ENCODE measurements at regions of chr2 and their contacts with region 1.

Region 1: DNA sequence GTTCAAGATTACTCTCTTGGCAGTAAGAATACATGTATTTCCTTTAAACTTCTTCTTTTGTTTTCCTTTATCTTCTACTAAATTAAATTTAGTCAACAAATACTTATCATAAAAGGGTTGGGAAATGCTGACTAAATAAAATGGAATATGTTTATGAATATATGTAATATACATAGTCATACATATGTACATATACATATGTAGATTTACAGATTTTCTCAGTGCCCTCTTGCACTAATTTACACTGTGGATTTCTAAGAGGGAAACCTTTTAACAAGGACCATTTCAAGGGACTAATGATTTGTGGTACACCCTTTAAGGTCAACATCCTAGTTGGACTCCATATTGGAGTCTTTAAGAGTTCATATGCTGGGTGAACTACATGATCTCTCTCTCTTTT is 37.2 kb downstream of the FAM98A start:
- DNase-seq: no peak
- ATAC-seq: no peak
- H3K4me3 Mint-ChIP-seq: no peak overlapping the region
- H3K27ac Mint-ChIP-seq: no peak overlapping the region
- H3K4me1 Mint-ChIP-seq: peaks cover 5% of the 10 kb centered on the region
- H3K27me3 Mint-ChIP-seq: no peaks in the 10 kb centered on the region
- CTCF ChIP-seq: no peak

Region 2: DNA sequence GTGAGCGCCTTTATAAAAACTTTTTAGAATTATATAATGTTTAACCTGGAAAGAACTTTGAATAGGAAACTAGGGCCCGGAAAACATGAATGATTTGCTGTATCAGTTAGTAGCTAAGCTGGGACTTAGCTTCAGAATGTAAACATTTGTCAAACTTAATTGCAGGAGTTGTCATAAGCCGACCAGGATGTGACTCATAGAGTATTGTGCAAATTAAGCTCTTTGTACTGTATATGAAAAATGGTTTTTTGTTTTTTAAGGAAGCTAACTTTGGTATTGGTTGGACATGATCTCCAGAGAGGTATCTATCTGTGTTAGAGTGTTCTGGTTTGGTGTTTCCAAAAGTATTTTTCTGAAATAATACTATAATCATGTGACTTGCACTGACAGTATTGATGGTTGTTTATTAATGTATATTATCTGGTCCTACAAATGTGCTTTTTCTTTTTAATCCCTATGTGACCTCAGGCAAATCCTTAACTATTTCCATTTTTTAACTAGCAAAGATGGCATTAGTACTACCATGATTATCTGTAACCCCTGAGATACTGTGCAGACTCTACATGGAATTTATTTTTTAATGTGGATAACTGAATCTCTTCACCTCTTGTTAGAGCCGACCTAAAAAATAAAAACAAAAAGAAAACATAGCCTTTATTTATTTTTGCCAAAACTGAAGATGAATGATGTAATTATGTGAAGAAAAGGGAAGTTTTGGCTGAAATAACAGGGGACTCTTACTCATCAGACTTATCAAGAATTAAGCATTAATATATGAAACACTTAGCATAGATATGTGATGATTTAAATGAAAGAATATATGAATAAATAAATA is 1272.5 kb before region 1 on chr2:
- CTCF ChIA-PET with region 1: no interaction called
- POLR2A ChIA-PET with region 1: interaction called, 11 read pairs
- intact Hi-C with region 1: no loop called
- DNase-seq: no peak
- ATAC-seq: no peak
- H3K4me3 Mint-ChIP-seq: no peak overlapping the region
- H3K27ac Mint-ChIP-seq: no peak overlapping the region
- H3K4me1 Mint-ChIP-seq: peaks cover 25% of the 10 kb centered on the region
- H3K27me3 Mint-ChIP-seq: no peaks in the 10 kb centered on the region
- CTCF ChIP-seq: no peak

Region 3: DNA sequence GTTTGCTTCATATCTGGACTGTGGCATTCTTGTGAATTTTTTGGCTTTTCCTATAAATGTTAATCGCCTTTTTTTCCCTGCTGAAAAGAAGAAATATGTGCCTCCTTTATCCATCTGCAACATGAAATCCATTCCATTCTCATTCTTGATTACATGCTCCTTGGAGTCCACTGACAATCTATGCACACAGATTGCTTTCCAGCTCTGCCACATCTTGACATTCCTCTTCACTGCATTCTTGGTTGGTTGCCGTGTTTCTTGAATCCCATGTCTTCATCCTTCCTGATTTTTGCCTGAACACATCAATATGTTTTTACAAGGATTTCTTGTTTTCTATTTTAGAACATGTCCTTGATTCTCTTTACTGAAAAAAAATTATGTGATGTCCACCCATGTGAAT is 1231.7 kb before region 1 on chr2:
- CTCF ChIA-PET with region 1: no interaction called
- POLR2A ChIA-PET with region 1: no interaction called
- intact Hi-C with region 1: no loop called
- DNase-seq: no peak
- ATAC-seq: no peak
- H3K4me3 Mint-ChIP-seq: no peak overlapping the region
- H3K27ac Mint-ChIP-seq: no peak overlapping the region
- H3K4me1 Mint-ChIP-seq: no peaks in the 10 kb centered on the region
- H3K27me3 Mint-ChIP-seq: no peaks in the 10 kb centered on the region
- CTCF ChIP-seq: no peak

Region 4: DNA sequence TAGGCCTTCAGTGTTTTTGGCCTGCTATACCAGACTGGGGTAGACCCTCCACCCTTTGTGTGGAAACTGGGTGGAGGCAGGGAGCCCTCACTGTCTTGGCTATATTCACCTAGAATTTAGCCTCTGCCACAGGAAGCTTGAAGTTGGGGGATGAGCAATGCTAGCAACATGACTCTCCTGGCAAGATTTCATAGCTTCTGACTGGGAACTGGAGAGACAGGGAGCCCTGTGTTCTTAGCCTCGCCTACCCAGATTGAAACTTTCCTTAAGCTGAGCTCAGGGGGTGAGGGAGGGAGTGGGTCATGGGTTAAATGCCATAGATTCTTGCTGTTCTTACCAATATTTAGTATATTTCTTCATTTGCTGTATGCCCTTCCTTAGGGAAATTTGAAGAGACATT is 84.0 kb after region 1 on chr2:
- CTCF ChIA-PET with region 1: no interaction called
- POLR2A ChIA-PET with region 1: no interaction called
- intact Hi-C with region 1: no loop called
- DNase-seq: no peak
- ATAC-seq: no peak
- H3K4me3 Mint-ChIP-seq: no peak overlapping the region
- H3K27ac Mint-ChIP-seq: no peak overlapping the region
- H3K4me1 Mint-ChIP-seq: peaks cover 6% of the 10 kb centered on the region
- H3K27me3 Mint-ChIP-seq: peaks cover 3% of the 10 kb centered on the region
- CTCF ChIP-seq: no peak